ENCODE measurements at regions of chr7 and their contacts with region 1.

Region 1: DNA sequence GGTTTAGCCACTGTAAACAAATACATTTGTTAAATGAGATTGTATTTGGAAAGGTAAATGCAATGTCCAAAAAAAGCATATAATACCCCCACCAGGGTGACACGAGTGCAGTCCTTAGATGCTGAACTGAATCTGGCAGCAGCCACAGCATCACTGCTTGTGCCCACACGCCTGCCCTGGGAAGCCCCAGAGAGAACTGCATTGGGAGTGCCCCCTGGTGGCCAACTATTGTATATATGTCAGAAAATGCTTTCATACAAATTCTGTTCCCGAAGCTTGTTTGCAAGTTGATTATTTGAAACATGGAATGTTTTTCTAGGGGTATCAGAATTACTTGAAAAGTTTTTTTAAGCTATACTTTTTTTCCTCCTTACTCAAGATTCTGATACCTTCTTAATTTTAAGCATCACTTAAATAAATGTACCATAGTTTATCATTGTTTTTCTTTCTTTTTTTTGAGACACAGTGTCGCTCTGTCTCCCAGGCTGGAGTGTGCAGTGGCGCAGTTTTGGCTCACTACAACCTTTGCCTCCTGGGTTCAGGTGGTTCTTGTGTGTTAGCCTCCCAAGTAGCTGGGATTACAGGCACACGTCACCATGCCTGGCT is 50.1 kb downstream of the LANCL2 start:
- DNase-seq: peak; percentile 86
- CTCF ChIP-seq: peak; percentile 75

Region 2: DNA sequence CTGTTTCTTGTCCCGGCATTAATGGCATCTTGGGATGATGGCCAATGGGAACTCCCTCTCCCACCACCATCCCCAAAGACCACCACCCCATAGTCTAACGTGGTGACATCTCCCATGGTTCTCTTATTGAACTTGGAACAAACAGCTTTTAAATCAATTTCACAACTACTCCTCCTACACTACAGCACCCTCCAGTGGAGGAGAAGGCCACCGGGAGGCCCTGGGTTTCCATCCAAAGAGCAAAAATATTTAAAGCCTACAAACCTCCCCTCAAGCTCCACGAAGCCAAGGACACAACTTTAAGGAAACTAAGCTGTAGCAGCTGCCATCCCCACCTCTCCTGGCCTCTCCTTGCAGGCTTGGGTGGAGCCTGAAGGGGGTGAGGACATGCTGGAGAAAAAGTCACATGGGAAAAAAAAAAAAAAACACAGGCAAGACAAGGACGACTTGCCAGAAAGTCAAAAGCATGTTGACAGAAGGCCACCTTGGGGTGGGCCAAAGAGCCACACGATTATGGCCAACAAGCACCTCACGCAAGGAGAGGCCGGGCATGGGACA is 144.1 kb before region 1 on chr7:
- CTCF ChIA-PET with region 1: interaction called, 132 read pairs
- POLR2A ChIA-PET with region 1: no interaction called
- DNase-seq: peak; percentile 23
- CTCF ChIP-seq: peak; percentile 39

Region 3: DNA sequence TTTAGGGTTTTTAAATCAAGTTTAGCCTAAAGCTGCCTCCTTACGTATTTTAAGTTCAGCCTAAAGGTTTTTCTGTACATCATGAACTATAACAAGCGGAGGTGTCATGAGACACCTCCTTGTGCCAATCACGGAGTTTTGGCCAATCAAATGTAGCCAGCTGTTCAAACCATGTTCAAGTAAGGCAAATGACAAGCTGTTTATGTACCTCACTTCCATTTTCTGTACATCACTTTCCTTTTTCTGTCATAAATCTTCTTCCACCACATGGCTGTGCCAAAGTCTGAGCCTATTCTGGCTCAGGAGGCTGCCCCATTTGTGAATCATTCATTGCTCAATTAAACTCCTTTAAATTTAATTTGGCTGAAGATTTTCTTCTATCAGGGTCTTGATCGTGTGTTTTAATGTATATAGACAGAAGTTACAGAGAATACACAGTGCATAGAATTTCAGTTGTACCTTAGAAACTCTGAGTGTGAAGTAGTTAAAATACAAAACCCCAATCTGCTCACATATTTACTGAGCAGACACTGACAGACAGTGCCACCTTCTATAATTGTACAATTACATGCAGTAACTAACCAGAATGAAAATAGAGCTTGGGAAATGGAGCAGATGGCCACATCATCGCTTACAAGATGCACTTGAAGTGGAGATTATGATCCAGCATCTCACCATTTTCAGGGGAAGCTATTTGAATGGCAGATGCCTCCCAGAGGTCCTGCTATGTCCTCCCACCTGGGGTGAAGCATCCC is 127.0 kb before region 1 on chr7:
- CTCF ChIA-PET with region 1: interaction called, 132 read pairs
- POLR2A ChIA-PET with region 1: no interaction called
- DNase-seq: no peak
- CTCF ChIP-seq: peak; percentile 4

Region 4: DNA sequence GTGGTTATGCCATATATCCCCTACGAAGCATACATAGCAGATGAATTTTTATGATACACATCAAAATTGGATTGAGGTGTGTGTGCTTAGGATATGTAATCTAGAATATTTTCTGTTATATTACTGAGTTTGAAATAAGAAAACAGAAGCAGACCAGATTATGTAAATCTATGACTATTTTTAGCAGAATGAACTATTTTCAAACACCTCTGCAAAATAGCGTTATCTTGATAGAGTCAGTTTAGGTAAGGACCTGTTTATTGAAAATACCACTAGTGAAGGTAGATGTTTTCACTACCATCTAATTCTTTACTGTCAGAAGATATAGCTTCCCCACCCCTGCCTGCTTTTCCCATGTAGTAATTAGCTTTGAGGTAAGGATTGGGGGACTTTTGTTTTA is 41.1 kb before region 1 on chr7:
- CTCF ChIA-PET with region 1: interaction called, 12 read pairs
- POLR2A ChIA-PET with region 1: no interaction called
- DNase-seq: no peak
- CTCF ChIP-seq: no peak

Region 5: DNA sequence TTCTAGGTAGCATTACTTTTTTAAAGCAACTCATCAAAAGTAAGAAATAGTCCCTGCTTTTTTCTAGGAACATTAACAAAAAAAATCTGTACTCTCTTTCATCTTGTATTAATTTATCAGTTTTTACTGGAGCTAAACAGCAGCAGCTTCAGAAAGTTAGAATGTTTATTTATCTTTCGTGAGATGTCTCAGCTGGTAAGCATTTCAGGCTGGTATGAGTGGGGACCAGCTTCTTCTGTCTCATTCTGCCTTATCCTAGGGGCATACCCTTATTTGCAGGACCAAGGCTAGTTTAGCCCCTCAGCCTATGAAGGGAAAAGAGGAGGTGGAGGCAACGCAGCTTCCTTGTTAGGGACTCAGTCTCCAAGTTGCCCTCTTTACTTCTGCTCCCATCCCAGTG is 15.1 kb before region 1 on chr7:
- CTCF ChIA-PET with region 1: interaction called, 23 read pairs
- POLR2A ChIA-PET with region 1: no interaction called
- DNase-seq: no peak
- CTCF ChIP-seq: no peak

Region 6: GRCh38 chr7:55641273-55641691 is 226.0 kb after region 1 on chr7:
- CTCF ChIA-PET with region 1: no interaction called
- POLR2A ChIA-PET with region 1: no interaction called
- DNase-seq: peak; percentile 53
- CTCF ChIP-seq: peak; percentile 80

Region 7: DNA sequence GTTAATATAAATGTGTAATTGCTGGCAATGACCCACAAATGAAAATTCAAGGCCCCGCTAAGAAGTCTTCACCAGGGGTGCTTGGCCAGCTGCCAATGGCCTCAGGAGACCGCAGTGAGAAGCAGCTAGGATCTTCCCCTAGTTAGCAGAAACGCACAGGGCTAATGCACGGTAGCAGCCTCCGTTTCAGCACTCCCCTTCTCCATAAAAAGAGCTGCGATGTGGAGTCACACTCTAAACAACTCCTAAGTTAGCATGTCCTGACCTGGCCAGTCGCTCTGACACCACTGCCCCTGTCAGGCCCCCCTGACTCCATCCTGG is 308.3 kb after region 1 on chr7:
- CTCF ChIA-PET with region 1: no interaction called
- POLR2A ChIA-PET with region 1: no interaction called
- DNase-seq: no peak
- CTCF ChIP-seq: no peak

Region 8: GRCh38 chr7:56019501-56019900 is 604.2 kb after region 1 on chr7:
- CTCF ChIA-PET with region 1: no interaction called
- POLR2A ChIA-PET with region 1: no interaction called
- DNase-seq: no peak
- CTCF ChIP-seq: no peak